Naive thymus-derived CD4-positive, alpha-beta T cell (primary cell): ENCODE measurements at regions of chr1 and their contacts with region 1.

Region 1: GRCh38 chr1:108691942-108692723 is at the start of gene PRPF38B:
- DNase-seq: peak; percentile 86 to 94 (median 93)
- ATAC-seq: peak; percentile 91
- H3K4me3 ChIP-seq: peak within 1 kb of the TSS; percentile 80
- H3K4me3 Mint-ChIP-seq: peak within 1 kb of the TSS; percentile 91 to 100 (median 97)
- H3K27ac ChIP-seq: peak within 1 kb of the TSS; percentile 90
- H3K27ac Mint-ChIP-seq: peak within 1 kb of the TSS; percentile 90 to 100 (median 98)
- H3K4me1 ChIP-seq: peaks cover 14 to 34% of the 10 kb centered on the region in 2 donors
- H3K4me1 Mint-ChIP-seq: peaks cover 24 to 52% (median 41%) of the 10 kb centered on the region in 7 donors
- H3K27me3 ChIP-seq: no peaks in the 10 kb centered on the region
- H3K27me3 Mint-ChIP-seq: peaks cover 0 to 10% (median 0%) of the 10 kb centered on the region in 5 donors
- total RNA-seq, gene PRPF38B: 85.5 to 136 (median 118) TPM

Region 2: GRCh38 chr1:108643492-108644335 is 48.4 kb before region 1 on chr1:
- CTCF ChIA-PET with region 1: interaction called, 55 read pairs
- POLR2A ChIA-PET with region 1: interaction called, 205 read pairs
- intact Hi-C with region 1: loop called (anchors 1 kb)
- DNase-seq: peak in 7 of 9 donors; percentile 59 to 78 (median 67)
- ATAC-seq: peak; percentile 45
- H3K4me3 ChIP-seq: no peak overlapping the region
- H3K4me3 Mint-ChIP-seq: peak overlapping the region in 9 of 10 donors; percentile 4 to 70 (median 47)
- H3K27ac ChIP-seq: peak overlapping the region; percentile 71
- H3K27ac Mint-ChIP-seq: peak overlapping the region; percentile 68 to 100 (median 98)
- H3K4me1 ChIP-seq: peaks cover 49 to 52% of the 10 kb centered on the region in 2 donors
- H3K4me1 Mint-ChIP-seq: peaks cover 55 to 81% (median 75%) of the 10 kb centered on the region in 7 donors
- H3K27me3 ChIP-seq: no peaks in the 10 kb centered on the region
- H3K27me3 Mint-ChIP-seq: no peaks in the 10 kb centered on the region

Region 3: GRCh38 chr1:108799001-108799400 is 106.9 kb after region 1 on chr1:
- CTCF ChIA-PET with region 1: no interaction called
- POLR2A ChIA-PET with region 1: no interaction called
- intact Hi-C with region 1: no loop called
- DNase-seq: no peak
- ATAC-seq: no peak
- H3K4me3 ChIP-seq: no peak overlapping the region
- H3K4me3 Mint-ChIP-seq: no peak overlapping the region
- H3K27ac ChIP-seq: no peak overlapping the region
- H3K27ac Mint-ChIP-seq: peak overlapping the region in 1 of 9 donors; percentile 17
- H3K4me1 ChIP-seq: no peaks in the 10 kb centered on the region
- H3K4me1 Mint-ChIP-seq: peaks cover 0 to 5% (median 0%) of the 10 kb centered on the region in 7 donors
- H3K27me3 ChIP-seq: no peaks in the 10 kb centered on the region
- H3K27me3 Mint-ChIP-seq: no peaks in the 10 kb centered on the region

Region 4: DNA sequence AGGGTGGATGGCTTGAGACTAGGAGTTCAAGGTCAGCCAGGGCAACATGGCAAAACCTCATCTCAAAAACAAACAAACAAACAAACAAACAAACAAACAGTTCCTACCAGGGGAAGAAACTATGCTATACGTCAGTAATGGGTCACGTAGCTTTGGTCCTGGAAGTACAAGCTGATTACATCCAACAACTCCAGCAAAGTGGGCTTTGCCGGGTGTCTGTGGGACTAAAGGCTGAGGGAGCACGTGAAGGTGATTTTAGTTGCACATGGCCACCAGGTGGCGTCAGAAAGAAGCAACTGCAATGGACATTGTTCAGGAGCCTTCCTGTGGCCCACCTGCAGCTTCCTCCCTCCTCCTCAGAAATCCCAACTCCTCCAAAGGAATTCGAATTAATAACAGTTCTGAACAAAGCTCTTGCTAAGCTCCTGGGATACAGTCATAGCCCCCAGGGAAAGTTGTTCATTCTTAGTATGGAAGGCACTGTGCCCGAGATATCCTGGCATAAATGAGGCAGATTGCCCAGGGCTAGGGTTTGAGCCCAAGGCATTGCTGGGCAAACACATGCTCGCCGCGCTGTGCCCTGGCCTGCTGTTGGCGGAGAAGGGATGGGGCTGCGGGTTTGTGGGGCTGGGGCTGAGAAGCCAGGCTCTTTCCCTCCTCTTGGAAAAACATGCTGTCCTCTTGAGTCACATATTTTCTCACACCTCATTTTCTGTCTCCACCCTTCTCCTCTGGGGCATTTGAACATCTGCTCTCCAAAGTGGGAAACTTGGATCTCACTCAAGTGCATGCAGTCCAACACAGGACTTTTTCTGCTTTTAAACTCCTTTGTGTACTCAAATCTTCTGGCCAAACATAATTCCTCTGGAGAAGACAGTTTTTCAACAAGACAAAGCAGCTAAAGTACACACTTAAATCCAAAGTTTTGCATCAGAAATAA is 136.2 kb after region 1 on chr1:
- CTCF ChIA-PET with region 1: interaction called, 7 read pairs
- POLR2A ChIA-PET with region 1: interaction called, 11 read pairs
- intact Hi-C with region 1: loop called (anchors 1 to 2 kb)
- DNase-seq: peak; percentile 37 to 62 (median 46)
- ATAC-seq: peak; percentile 61
- H3K4me3 ChIP-seq: no peak overlapping the region
- H3K4me3 Mint-ChIP-seq: no peak overlapping the region
- H3K27ac ChIP-seq: no peak overlapping the region
- H3K27ac Mint-ChIP-seq: no peak overlapping the region
- H3K4me1 ChIP-seq: no peaks in the 10 kb centered on the region
- H3K4me1 Mint-ChIP-seq: peaks cover 0 to 9% (median 0%) of the 10 kb centered on the region in 7 donors
- H3K27me3 ChIP-seq: peaks cover 0 to 3% of the 10 kb centered on the region in 2 donors
- H3K27me3 Mint-ChIP-seq: peaks cover 0 to 12% (median 0%) of the 10 kb centered on the region in 5 donors

Region 5: DNA sequence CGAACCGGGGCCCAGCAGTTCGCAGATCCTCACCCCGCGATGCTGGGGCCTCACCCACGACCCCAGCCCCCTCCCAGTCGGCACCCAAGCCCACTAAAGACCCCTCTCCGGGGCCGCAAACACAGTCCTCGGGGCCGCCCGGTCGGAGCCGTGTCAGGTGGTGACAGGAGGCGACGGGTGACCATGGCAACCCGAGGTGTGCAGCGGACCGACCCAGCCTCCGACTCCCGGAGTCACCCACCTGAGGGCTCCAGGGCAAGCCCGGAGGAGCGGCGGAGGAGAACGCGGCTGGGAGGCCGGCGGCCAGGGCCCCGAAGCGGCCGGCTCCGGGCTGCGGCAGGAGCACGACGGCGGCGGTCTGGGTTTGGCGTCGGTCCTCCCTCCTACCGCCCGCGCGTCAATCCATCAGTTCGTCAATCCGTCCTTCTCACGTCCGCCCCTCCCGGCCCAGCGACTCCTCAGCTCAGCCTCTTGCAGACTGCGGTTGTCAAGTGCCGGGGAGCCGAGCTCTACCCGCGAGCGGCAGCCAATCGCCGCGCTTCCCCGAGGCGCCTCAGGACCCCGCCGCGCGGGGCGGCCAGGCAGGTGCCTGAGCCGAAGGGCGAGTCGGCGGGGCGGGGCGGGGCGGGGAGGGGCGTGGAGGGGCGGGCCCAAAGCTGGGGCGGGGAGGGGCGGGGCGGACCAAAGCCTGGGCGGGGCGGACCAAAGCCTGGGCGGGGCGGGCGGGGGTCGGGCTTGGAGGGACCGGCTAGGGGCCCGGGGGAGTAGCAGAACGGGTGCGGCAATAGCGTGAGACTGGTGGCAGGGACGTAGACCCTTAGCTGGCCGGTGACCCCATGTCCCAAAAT is 349.7 kb after region 1 on chr1 and contains the start of gene WDR47:
- CTCF ChIA-PET with region 1: no interaction called
- POLR2A ChIA-PET with region 1: interaction called, 3 read pairs
- intact Hi-C with region 1: loop called (anchors 1 to 5 kb)
- DNase-seq: peak; percentile 95 to 97 (median 96)
- ATAC-seq: peak; percentile 99
- H3K4me3 ChIP-seq: peak within 1 kb of the TSS; percentile 97
- H3K4me3 Mint-ChIP-seq: peak within 1 kb of the TSS; percentile 86 to 97 (median 94)
- H3K27ac ChIP-seq: peak within 1 kb of the TSS; percentile 90
- H3K27ac Mint-ChIP-seq: peak within 1 kb of the TSS; percentile 78 to 97 (median 91)
- H3K4me1 ChIP-seq: peaks cover 0 to 7% of the 10 kb centered on the region in 2 donors
- H3K4me1 Mint-ChIP-seq: peaks cover 7 to 25% (median 16%) of the 10 kb centered on the region in 7 donors
- H3K27me3 ChIP-seq: no peaks in the 10 kb centered on the region
- H3K27me3 Mint-ChIP-seq: peaks cover 0 to 7% (median 0%) of the 10 kb centered on the region in 5 donors
- total RNA-seq, gene WDR47: 9.8 to 15.4 (median 14.4) TPM

Region 6: DNA sequence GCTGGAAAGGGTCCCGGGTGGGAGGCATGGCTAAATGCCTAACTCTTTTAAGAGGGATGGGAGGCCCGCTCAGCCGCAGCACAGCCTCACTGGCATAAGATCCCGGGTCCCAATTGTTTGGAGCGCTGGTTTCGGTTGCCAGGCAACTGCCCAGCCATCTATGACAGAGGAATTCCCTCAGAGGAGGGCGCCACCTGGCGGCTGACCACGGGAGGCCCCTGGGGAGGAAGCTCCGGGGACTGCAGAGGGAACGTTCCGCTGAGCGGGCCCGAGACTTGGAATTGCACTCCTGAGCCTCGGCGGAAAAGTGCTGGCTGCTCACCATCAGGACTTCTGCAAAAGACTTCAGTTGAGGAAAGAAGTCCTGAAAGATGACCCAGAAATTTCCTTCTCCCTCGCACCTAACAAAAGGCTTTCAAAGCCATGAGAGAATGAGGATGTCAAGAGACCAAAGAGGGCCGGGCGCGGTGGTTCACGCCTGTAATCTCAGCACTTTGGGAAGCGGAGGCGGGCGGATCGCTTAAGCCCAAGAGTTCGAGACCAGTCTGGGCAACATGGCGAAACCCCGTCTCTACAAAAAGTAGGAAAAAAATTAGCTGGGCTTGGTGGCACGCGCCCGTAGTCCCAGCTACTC is 420.6 kb after region 1 on chr1:
- CTCF ChIA-PET with region 1: interaction called, 4 read pairs
- POLR2A ChIA-PET with region 1: interaction called, 3 read pairs
- intact Hi-C with region 1: loop called (anchors 1 kb)
- DNase-seq: peak; percentile 75 to 93 (median 85)
- ATAC-seq: peak; percentile 75
- H3K4me3 ChIP-seq: peak overlapping the region; percentile 68
- H3K4me3 Mint-ChIP-seq: peak overlapping the region; percentile 78 to 93 (median 88)
- H3K27ac ChIP-seq: peak overlapping the region; percentile 68
- H3K27ac Mint-ChIP-seq: peak overlapping the region; percentile 84 to 96 (median 92)
- H3K4me1 ChIP-seq: peaks cover 16 to 21% of the 10 kb centered on the region in 2 donors
- H3K4me1 Mint-ChIP-seq: peaks cover 23 to 40% (median 28%) of the 10 kb centered on the region in 7 donors
- H3K27me3 ChIP-seq: no peaks in the 10 kb centered on the region
- H3K27me3 Mint-ChIP-seq: peaks cover 0 to 41% (median 0%) of the 10 kb centered on the region in 5 donors

Region 7: GRCh38 chr1:109426278-109427170 is 734.4 kb after region 1 on chr1 and contains the start of gene PSMA5:
- CTCF ChIA-PET with region 1: no interaction called
- POLR2A ChIA-PET with region 1: no interaction called
- intact Hi-C with region 1: loop called in 1 of 2 experiments (anchors 5 kb)
- DNase-seq: peak; percentile 73 to 97 (median 95)
- ATAC-seq: peak; percentile 96
- H3K4me3 ChIP-seq: peak within 1 kb of the TSS; percentile 77
- H3K4me3 Mint-ChIP-seq: peak within 1 kb of the TSS; percentile 95 to 99 (median 98)
- H3K27ac ChIP-seq: peak within 1 kb of the TSS; percentile 91
- H3K27ac Mint-ChIP-seq: peak within 1 kb of the TSS; percentile 80 to 99 (median 98)
- H3K4me1 ChIP-seq: peaks cover 27 to 29% of the 10 kb centered on the region in 2 donors
- H3K4me1 Mint-ChIP-seq: peaks cover 29 to 46% (median 34%) of the 10 kb centered on the region in 7 donors
- H3K27me3 ChIP-seq: no peaks in the 10 kb centered on the region
- H3K27me3 Mint-ChIP-seq: no peaks in the 10 kb centered on the region
- total RNA-seq, gene PSMA5: 38.3 to 203 (median 70.7) TPM